Caco-2 (cell line): ENCODE measurements at regions of chr9 and their contacts with region 1.

Region 1: GRCh38 chr9:96449845-96450612 is at the start of gene HABP4:
- DNase-seq: peak; percentile 95 to 97
- H3K4me3 ChIP-seq: peak within 1 kb of the TSS; percentile 89
- H3K4me3 Mint-ChIP-seq: peak within 1 kb of the TSS; percentile 93
- H3K27ac Mint-ChIP-seq: peak within 1 kb of the TSS; percentile 76
- H3K4me1 ChIP-seq: 0 out of 2 replicates have a peak, but pooled peaks cover 3% of the 10 kb centered on the region
- H3K4me1 Mint-ChIP-seq: peaks cover 12% of the 10 kb centered on the region
- H3K27me3 ChIP-seq: no peaks in the 10 kb centered on the region
- H3K27me3 Mint-ChIP-seq: no peaks in the 10 kb centered on the region
- CTCF ChIP-seq: no peak
- total RNA-seq, gene HABP4: 24.8 and 26.7 TPM in 2 replicates

Region 2: GRCh38 chr9:96540106-96540505 is 90.1 kb after region 1 on chr9:
- CTCF ChIA-PET with region 1: no interaction called
- POLR2A ChIA-PET with region 1: no interaction called
- intact Hi-C with region 1: no loop called
- DNase-seq: no peak
- H3K4me3 ChIP-seq: no peak overlapping the region
- H3K4me3 Mint-ChIP-seq: no peak overlapping the region
- H3K27ac Mint-ChIP-seq: no peak overlapping the region
- H3K4me1 ChIP-seq: no peaks in the 10 kb centered on the region
- H3K4me1 Mint-ChIP-seq: no peaks in the 10 kb centered on the region
- H3K27me3 ChIP-seq: no peaks in the 10 kb centered on the region
- H3K27me3 Mint-ChIP-seq: no peaks in the 10 kb centered on the region
- CTCF ChIP-seq: no peak

Region 3: GRCh38 chr9:96777426-96777864 is 327.4 kb after region 1 on chr9:
- CTCF ChIA-PET with region 1: no interaction called
- POLR2A ChIA-PET with region 1: no interaction called
- intact Hi-C with region 1: loop called (anchors 10 kb)
- DNase-seq: no peak
- H3K4me3 ChIP-seq: peak overlapping the region; percentile 85
- H3K4me3 Mint-ChIP-seq: peak overlapping the region; percentile 95
- H3K27ac Mint-ChIP-seq: peak overlapping the region; percentile 90
- H3K4me1 ChIP-seq: peaks cover 4% of the 10 kb centered on the region; the same call in 1 of the 2 replicates
- H3K4me1 Mint-ChIP-seq: peaks cover 6% of the 10 kb centered on the region
- H3K27me3 ChIP-seq: no peaks in the 10 kb centered on the region
- H3K27me3 Mint-ChIP-seq: no peaks in the 10 kb centered on the region
- CTCF ChIP-seq: no peak